ENCODE measurements at regions of chr2 and their contacts with region 1.

Region 1: DNA sequence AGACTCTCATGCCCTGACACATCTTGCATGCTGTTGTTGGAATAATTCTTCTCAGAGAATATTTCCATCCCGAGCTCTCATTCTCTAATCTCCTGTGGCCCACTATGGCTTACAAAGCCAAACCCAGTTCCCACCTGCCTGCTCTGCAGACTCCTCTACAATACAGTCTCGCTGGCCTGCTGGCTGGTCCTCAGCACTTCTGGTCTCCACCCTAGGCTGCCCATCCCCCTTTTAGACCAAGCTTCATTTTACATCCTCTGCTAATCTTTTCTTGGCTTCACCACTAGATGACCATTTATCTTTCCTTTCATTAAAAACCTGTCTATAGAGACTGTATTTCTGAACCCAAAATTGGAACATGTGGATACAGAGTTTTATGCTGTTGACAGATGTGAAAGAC is 42.5 kb upstream of the YPEL5 start:
- DNase-seq: no peak
- H3K4me3 ChIP-seq: no peak overlapping the region
- H3K27ac ChIP-seq: no peak overlapping the region
- H3K4me1 ChIP-seq: peaks cover 0 to 4% (median 0%) of the 10 kb centered on the region in 4 experiments; a peak in 2 of 7 replicates
- H3K27me3 ChIP-seq: no peaks in the 10 kb centered on the region
- CTCF ChIP-seq: no peak
- EP300 ChIP-seq: no peak
- POLR2A ChIP-seq: no peak
- RAD21 ChIP-seq: no peak

Region 2: DNA sequence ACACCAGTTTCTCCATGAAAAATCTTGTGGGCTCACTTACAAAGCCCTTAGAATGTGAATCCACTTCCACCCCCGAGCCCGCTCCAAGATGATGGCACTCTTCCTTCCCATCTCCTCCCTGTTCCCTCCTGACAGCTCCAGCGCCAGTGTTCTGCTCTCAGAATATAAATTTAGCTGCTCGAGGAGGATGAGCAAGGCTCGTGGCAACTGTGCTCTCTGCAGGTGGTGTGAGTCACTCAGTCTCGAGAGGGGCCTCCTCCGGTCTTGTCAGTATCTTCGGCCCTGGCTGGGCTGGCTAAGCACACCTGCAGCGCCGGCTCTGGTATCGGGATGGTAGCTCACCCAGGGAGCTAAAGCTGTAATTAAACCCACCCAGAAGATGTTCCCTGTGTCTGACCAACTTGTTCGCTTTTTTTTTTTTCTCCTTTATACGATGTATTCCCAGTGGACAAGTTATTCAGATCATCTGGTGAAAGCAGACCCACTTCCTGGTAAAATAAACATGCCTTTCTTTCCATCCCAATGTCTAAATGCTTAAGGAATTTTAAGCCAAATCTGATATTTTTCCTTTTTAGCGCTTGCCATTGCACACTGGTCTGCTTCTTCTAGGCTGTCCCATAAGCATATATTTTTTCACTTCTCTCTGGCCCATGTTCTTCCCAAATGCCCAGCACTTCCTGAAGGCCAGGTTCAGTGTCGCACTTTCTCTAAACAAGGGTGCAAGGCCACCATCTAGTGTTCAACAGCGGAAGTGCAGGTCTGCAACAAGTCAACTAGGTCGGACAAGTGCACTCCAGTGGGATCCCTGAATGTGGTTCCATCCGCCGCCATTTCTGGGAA is 11.1 kb after region 1 on chr2:
- CTCF ChIA-PET with region 1: interaction called, 12 read pairs
- POLR2A ChIA-PET with region 1: interaction called, 4 read pairs
- DNase-seq: peak; percentile 57 to 93
- H3K4me3 ChIP-seq: no peak overlapping the region
- H3K27ac ChIP-seq: no peak overlapping the region
- H3K4me1 ChIP-seq: peaks cover 0 to 7% (median 2%) of the 10 kb centered on the region in 4 experiments; a peak in 2 of 7 replicates
- H3K27me3 ChIP-seq: no peaks in the 10 kb centered on the region
- CTCF ChIP-seq: peak; percentile 91 to 99 (median 94)
- EP300 ChIP-seq: no peak
- POLR2A ChIP-seq: no peak
- RAD21 ChIP-seq: peak; percentile 91 to 95